ENCODE measurements at regions of chr1 and their contacts with region 1.

Region 1: DNA sequence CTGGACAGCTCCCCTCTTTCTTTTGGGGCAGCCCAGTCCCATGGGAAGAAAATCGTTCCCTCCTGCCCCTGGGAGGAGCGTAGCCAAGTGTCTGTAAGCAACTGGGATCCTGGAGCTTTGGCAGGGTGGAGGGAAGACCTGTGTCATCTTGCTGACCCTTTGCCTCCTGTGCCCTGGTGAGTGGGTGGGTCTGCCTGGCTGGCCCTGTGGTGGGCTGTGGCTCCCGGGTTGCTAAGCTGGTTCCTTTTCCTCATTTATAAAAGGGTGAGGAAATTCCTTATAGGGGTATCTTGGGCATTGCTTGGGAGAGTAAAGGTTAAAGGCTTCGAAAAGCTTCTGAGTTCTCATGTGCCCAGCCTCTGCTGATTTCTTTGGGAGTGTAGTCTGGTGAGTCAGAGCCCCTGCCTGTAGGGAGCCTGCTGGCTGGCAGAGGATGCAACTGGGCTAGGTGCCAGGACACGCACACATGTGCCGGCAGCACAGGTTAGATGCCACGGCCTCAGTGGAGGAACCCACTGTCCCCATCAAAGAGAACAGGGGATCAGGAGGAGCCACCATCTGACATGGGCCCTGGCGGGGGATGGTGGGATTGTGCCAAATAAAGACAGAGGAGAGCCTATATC is 85.2 kb downstream of the ARHGEF10L start:
- DNase-seq: no peak
- H3K4me3 ChIP-seq: no peak overlapping the region
- H3K27ac ChIP-seq: no peak overlapping the region
- H3K4me1 ChIP-seq: peaks cover 0 to 2% (median 0%) of the 10 kb centered on the region in 4 experiments; a peak in 1 of 7 replicates
- H3K27me3 ChIP-seq: no peaks in the 10 kb centered on the region
- CTCF ChIP-seq: no peak
- EP300 ChIP-seq: no peak
- POLR2A ChIP-seq: no peak
- RAD21 ChIP-seq: no peak

Region 2: DNA sequence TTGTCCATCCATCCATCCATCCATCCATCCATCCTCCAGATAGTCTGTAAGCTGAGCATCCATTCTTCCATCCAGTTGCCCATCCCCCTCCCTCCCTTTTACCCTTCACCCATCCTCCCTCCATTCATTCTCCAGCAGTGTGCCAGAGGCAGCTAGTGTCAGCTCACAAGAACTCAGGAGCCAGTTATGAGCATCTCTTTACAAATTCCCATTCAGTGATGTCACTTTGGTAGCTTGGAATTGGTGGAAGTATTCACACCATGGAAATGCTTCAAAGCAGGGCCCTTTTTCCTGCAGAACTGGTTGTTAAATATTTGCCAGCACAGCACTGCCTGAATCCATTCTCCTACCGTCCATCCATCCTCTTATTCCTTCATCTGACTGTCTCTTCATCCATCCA is 12.7 kb before region 1 on chr1:
- CTCF ChIA-PET with region 1: interaction called, 76 read pairs
- POLR2A ChIA-PET with region 1: interaction called, 3 read pairs
- DNase-seq: no peak
- H3K4me3 ChIP-seq: no peak overlapping the region
- H3K27ac ChIP-seq: no peak overlapping the region
- H3K4me1 ChIP-seq: 0 out of 7 replicates have a peak, but pooled peaks cover 0 to 2% (median 0%) of the 10 kb centered on the region in 4 experiments
- H3K27me3 ChIP-seq: no peaks in the 10 kb centered on the region
- CTCF ChIP-seq: no peak
- EP300 ChIP-seq: no peak
- POLR2A ChIP-seq: no peak
- RAD21 ChIP-seq: no peak

Region 3: GRCh38 chr1:17819129-17819802 is 194.5 kb after region 1 on chr1:
- CTCF ChIA-PET with region 1: no interaction called
- POLR2A ChIA-PET with region 1: no interaction called
- DNase-seq: no peak
- H3K4me3 ChIP-seq: no peak overlapping the region
- H3K27ac ChIP-seq: no peak overlapping the region
- H3K4me1 ChIP-seq: no peaks in the 10 kb centered on the region
- H3K27me3 ChIP-seq: no peaks in the 10 kb centered on the region
- CTCF ChIP-seq: no peak
- EP300 ChIP-seq: no peak
- POLR2A ChIP-seq: no peak
- RAD21 ChIP-seq: no peak